Ascending aorta (tissue), 2 donors: ENCODE measurements at regions of chr13 and their contacts with region 1.

Region 1: DNA sequence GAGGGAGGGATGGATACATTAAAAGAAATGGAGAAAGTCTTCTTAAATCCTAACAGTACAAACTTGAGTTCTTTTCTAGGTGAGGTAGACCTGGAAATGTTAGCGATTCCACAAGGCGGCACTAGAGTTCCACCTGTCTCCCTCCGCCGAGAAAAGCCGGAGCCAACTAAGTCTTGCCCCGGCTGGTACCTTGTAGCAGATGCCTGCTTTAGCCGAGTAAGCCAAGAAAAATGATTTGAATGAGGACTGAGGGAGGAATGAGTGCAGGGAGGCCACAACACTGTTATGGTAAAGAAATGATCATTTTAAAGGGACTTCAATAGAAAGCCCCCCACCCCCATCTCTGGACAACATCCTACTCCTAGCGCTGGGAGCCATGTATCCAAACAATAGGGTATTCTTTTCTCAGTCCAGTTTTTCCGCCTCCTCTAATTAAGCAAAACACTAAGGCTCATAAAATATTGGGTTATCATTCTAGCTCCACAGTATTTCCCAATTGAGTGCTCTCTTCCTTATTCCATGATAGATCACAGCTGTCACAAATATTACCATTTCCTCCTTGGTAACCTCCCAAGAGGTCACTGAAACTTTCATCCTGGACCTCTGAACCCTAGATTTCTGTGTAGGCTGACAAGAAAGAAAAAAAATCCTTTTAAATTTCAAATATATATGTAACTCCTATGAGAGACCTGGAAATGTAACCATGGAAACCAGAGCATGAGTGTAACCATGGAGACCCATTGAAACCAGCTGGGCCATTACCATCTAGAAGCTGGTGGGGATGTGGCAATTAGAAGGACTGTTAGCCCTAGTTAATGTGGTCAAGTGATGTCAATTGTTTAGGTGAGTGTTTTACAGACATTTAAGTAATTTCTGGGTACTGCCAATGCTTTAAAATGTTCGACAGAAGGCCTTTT is 58.3 kb downstream of the GPALPP1 start:
- DNase-seq: peak in 1 of 2 donors; percentile 79
- H3K4me3 ChIP-seq: peak overlapping the region; percentile 34 to 57
- H3K27ac ChIP-seq: no peak overlapping the region
- H3K4me1 ChIP-seq: no peaks in the 10 kb centered on the region
- H3K27me3 ChIP-seq: no peaks in the 10 kb centered on the region
- CTCF ChIP-seq: peak; percentile 76 to 89 (median 80)

Region 2: GRCh38 chr13:44425041-44425814 is 622.4 kb before region 1 on chr13:
- intact Hi-C with region 1: no loop called
- DNase-seq: no peak
- H3K4me3 ChIP-seq: no peak overlapping the region
- H3K27ac ChIP-seq: no peak overlapping the region
- H3K4me1 ChIP-seq: peaks cover 0 to 4% of the 10 kb centered on the region in 2 donors
- H3K27me3 ChIP-seq: no peaks in the 10 kb centered on the region
- CTCF ChIP-seq: no peak

Region 3: GRCh38 chr13:44917589-44918325 is 129.9 kb before region 1 on chr13:
- intact Hi-C with region 1: no loop called
- DNase-seq: peak; percentile 82 to 97
- H3K4me3 ChIP-seq: peak overlapping the region; percentile 42 to 60
- H3K27ac ChIP-seq: peak overlapping the region; percentile 98
- H3K4me1 ChIP-seq: peaks cover 21 to 38% of the 10 kb centered on the region in 2 donors
- H3K27me3 ChIP-seq: no peaks in the 10 kb centered on the region
- CTCF ChIP-seq: peak; percentile 53 to 81 (median 62)

Region 4: GRCh38 chr13:45196622-45197021 is 149.0 kb after region 1 on chr13:
- intact Hi-C with region 1: no loop called
- DNase-seq: no peak
- H3K4me3 ChIP-seq: no peak overlapping the region
- H3K27ac ChIP-seq: peak overlapping the region in 1 of 2 donors; percentile 43
- H3K4me1 ChIP-seq: peaks cover 0 to 12% of the 10 kb centered on the region in 2 donors
- H3K27me3 ChIP-seq: no peaks in the 10 kb centered on the region
- CTCF ChIP-seq: no peak

Region 5: GRCh38 chr13:45280751-45281634 is 233.3 kb after region 1 on chr13:
- intact Hi-C with region 1: loop called (anchors 1 kb)
- DNase-seq: peak in 1 of 2 donors; percentile 73
- H3K4me3 ChIP-seq: no peak overlapping the region
- H3K27ac ChIP-seq: no peak overlapping the region
- H3K4me1 ChIP-seq: peaks cover 0 to 4% of the 10 kb centered on the region in 2 donors
- H3K27me3 ChIP-seq: no peaks in the 10 kb centered on the region
- CTCF ChIP-seq: peak; percentile 58 to 79 (median 67)

Region 6: GRCh38 chr13:45310341-45311125 is 262.9 kb after region 1 on chr13:
- intact Hi-C with region 1: loop called (anchors 1 kb)
- DNase-seq: no peak
- H3K4me3 ChIP-seq: peak overlapping the region; percentile 27 to 79
- H3K27ac ChIP-seq: no peak overlapping the region
- H3K4me1 ChIP-seq: peaks cover 0 to 14% of the 10 kb centered on the region in 2 donors
- H3K27me3 ChIP-seq: no peaks in the 10 kb centered on the region
- CTCF ChIP-seq: no peak